CD4-positive, alpha-beta memory T cell (primary cell): ENCODE measurements at regions of chr11 and their contacts with region 1.

Region 1: DNA sequence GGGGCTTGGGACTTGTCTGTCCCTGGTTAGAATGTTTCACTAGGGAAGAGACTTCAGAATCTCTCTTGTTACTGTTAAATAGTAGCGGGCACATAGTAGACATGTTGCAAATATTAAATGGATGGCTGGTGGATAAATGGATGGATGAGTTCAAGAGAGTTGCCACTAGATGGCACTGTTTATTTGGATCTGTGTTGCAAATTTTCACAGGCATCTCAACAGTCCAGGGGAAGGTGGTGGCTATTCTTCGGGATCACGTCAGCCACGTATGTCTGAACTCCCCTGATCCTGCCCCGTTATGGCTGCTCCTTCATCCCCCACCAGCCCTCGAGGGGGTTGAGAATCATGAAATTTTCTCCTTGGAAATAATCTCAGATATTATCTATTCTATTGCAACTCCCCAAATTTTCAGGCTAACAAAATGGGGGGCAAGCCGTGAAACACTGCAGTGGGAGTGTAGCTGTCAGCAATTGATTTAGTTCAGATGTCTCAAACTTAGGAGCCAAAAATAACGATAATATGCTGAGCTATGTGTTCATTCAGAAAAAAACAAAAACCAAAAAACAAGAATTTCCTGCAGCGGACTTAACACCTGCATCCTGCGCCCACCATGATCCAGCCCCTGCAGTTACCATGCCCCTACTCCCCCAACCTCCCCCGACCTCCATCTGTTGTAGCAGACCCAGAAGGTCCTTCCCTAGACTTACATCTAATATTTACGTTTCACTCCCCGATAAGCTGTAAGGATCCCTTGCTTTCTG is 29.1 kb upstream of the BIRC3 start:
- DNase-seq: peak; percentile 56 to 74 (median 71)
- H3K4me3 ChIP-seq: no peak overlapping the region
- H3K4me3 Mint-ChIP-seq: peak overlapping the region in 5 of 8 donors; percentile 5 to 32 (median 12)
- H3K27ac ChIP-seq: no peak overlapping the region
- H3K27ac Mint-ChIP-seq: peak overlapping the region in 5 of 7 donors; percentile 19 to 79 (median 63)
- H3K4me1 ChIP-seq: peaks cover 18% of the 10 kb centered on the region
- H3K4me1 Mint-ChIP-seq: peaks cover 17 to 36% (median 20%) of the 10 kb centered on the region in 4 donors
- H3K27me3 ChIP-seq: no peaks in the 10 kb centered on the region
- H3K27me3 Mint-ChIP-seq: peaks cover 0 to 2% of the 10 kb centered on the region in 2 donors

Region 2: DNA sequence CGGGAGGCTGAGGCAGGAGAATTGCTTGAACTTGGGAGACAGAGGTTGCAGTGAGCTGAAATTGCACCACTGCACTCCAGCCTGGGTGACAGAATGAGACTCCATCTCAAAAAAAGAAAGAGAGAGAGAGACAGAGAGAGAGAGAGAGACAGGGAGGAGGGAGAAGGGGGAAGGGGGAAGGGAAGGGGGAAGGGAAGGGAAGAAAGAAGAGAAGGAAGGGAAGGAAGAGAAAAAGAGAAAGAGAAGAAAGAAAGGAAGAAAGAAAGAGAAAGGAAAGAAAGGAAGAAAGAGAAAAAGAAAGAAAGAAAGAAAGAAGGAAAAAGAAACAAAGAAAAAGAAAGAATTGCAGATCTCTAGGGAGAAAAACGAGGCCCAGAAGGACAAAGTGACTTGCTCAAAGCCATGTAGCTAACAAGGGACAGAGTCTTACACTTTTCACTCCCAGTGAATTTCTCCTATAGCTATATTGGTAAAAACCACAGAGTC is 44.7 kb before region 1 on chr11:
- CTCF ChIA-PET with region 1: no interaction called
- POLR2A ChIA-PET with region 1: no interaction called
- intact Hi-C with region 1: no loop called
- DNase-seq: no peak
- H3K4me3 ChIP-seq: no peak overlapping the region
- H3K4me3 Mint-ChIP-seq: no peak overlapping the region
- H3K27ac ChIP-seq: no peak overlapping the region
- H3K27ac Mint-ChIP-seq: no peak overlapping the region
- H3K4me1 ChIP-seq: no peaks in the 10 kb centered on the region
- H3K4me1 Mint-ChIP-seq: peaks cover 0 to 1% (median 0%) of the 10 kb centered on the region in 4 donors
- H3K27me3 ChIP-seq: no peaks in the 10 kb centered on the region
- H3K27me3 Mint-ChIP-seq: peaks cover 8 to 9% of the 10 kb centered on the region in 2 donors

Region 3: DNA sequence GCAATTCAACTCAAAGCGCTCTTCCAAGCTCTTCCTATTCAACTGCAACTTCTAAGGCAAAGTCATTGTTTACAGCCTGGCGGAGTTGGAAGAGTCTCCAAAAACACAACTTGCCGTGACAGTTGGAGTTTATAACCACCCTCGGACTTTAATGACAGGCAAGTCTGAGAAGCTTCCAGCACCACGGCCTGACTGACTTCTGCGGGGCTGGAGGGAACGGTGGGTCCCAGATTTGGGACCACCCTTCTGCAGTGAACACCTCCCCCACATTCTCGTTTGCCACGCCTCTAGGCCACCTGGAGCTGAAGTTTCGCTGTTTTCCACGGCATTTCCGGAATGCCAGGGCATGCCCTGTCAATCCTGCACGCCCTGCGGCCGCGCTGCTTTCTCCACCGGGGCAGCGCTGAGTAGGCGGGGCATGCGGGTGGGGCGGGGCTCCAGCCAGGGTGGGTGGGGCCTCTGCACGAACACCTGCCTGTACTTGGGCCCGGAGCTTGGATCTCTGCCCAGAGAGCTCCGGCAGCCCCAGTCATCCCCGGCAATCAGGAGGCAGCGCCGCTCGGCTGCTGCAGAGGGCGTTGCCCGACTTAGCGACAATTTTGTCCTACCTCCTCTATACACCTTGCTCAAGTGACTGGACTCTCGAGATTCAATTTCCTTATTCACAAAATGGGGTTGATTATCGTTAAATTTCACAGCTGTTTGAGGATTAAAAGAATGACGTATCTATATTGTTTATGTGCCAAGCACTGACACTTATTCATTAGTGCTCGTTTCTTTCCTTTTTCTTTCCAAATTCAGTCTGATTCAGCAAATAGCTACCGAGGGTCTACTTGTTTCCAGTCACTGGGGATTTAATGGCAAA is 19.6 kb before region 1 on chr11:
- CTCF ChIA-PET with region 1: interaction called, 17 read pairs
- POLR2A ChIA-PET with region 1: interaction called, 6 read pairs
- intact Hi-C with region 1: no loop called
- DNase-seq: peak; percentile 80 to 88 (median 85)
- H3K4me3 ChIP-seq: peak overlapping the region; percentile 45 to 49
- H3K4me3 Mint-ChIP-seq: peak overlapping the region; percentile 65 to 84 (median 77)
- H3K27ac ChIP-seq: no peak overlapping the region
- H3K27ac Mint-ChIP-seq: peak overlapping the region; percentile 68 to 85 (median 78)
- H3K4me1 ChIP-seq: peaks cover 23% of the 10 kb centered on the region
- H3K4me1 Mint-ChIP-seq: peaks cover 21 to 37% (median 27%) of the 10 kb centered on the region in 4 donors
- H3K27me3 ChIP-seq: no peaks in the 10 kb centered on the region
- H3K27me3 Mint-ChIP-seq: peaks cover 0 to 4% of the 10 kb centered on the region in 2 donors

Region 4: DNA sequence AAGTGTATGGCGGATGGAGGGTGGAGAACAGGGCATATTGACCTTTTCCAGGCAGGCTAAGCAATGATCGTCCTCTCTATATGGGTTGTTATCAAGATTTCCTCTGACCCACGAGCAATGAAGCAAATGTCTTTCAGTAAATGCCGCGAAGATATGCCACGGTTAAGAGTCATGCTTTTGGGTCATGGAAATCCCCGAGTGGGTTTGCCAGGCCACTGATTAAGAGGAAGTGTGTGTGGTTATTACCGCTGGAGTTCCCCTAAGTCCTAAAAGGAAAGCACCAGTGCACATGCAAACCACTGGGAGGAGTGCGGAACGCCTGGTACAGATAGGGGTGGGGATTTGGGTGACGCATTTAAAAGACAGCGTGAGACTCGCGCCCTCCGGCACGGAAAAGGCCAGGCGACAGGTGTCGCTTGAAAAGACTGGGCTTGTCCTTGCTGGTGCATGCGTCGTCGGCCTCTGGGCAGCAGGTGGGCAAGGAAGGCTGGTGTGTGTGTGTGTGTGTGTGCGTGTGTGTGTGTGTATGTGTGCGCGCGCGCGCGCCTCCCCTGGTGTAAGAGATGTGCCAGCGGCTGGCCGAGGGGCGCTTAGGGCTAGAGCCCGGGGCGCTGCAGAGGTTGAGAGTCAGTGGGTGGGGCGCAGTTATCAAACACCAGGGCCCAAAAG is 29.1 kb after region 1 on chr11 and contains the start of gene BIRC3:
- CTCF ChIA-PET with region 1: interaction called, 654 read pairs
- POLR2A ChIA-PET with region 1: interaction called, 109 read pairs
- intact Hi-C with region 1: loop called (anchors 1 kb)
- DNase-seq: peak; percentile 93 to 99 (median 96)
- H3K4me3 ChIP-seq: peak within 1 kb of the TSS; percentile 94 to 96
- H3K4me3 Mint-ChIP-seq: peak within 1 kb of the TSS; percentile 90 to 100 (median 96)
- H3K27ac ChIP-seq: peak within 1 kb of the TSS; percentile 95
- H3K27ac Mint-ChIP-seq: peak within 1 kb of the TSS; percentile 90 to 99 (median 99)
- H3K4me1 ChIP-seq: peaks cover 59% of the 10 kb centered on the region
- H3K4me1 Mint-ChIP-seq: peaks cover 46 to 81% (median 58%) of the 10 kb centered on the region in 4 donors
- H3K27me3 ChIP-seq: no peaks in the 10 kb centered on the region
- H3K27me3 Mint-ChIP-seq: no peaks in the 10 kb centered on the region
- total RNA-seq, gene BIRC3: 197 to 198 TPM

Region 5: GRCh38 chr11:102341844-102342318 is 53.7 kb after region 1 on chr11:
- CTCF ChIA-PET with region 1: interaction called, 89 read pairs
- POLR2A ChIA-PET with region 1: interaction called, 16 read pairs
- intact Hi-C with region 1: loop called (anchors 1 kb)
- DNase-seq: peak; percentile 64 to 78 (median 70)
- H3K4me3 ChIP-seq: no peak overlapping the region
- H3K4me3 Mint-ChIP-seq: no peak overlapping the region
- H3K27ac ChIP-seq: peak overlapping the region; percentile 1
- H3K27ac Mint-ChIP-seq: peak overlapping the region; percentile 53 to 93 (median 77)
- H3K4me1 ChIP-seq: peaks cover 14% of the 10 kb centered on the region
- H3K4me1 Mint-ChIP-seq: peaks cover 19 to 24% (median 23%) of the 10 kb centered on the region in 4 donors
- H3K27me3 ChIP-seq: no peaks in the 10 kb centered on the region
- H3K27me3 Mint-ChIP-seq: peaks cover 0 to 1% of the 10 kb centered on the region in 2 donors

Region 6: GRCh38 chr11:102367364-102367763 is 79.2 kb after region 1 on chr11:
- CTCF ChIA-PET with region 1: interaction called, 29 read pairs
- POLR2A ChIA-PET with region 1: no interaction called
- intact Hi-C with region 1: no loop called
- DNase-seq: peak in 4 of 5 donors; percentile 41 to 53 (median 50)
- H3K4me3 ChIP-seq: no peak overlapping the region
- H3K4me3 Mint-ChIP-seq: peak overlapping the region in 3 of 8 donors; percentile 7 to 27 (median 17)
- H3K27ac ChIP-seq: no peak overlapping the region
- H3K27ac Mint-ChIP-seq: peak overlapping the region; percentile 33 to 93 (median 72)
- H3K4me1 ChIP-seq: peaks cover 21% of the 10 kb centered on the region
- H3K4me1 Mint-ChIP-seq: peaks cover 27 to 37% (median 28%) of the 10 kb centered on the region in 4 donors
- H3K27me3 ChIP-seq: no peaks in the 10 kb centered on the region
- H3K27me3 Mint-ChIP-seq: no peaks in the 10 kb centered on the region

Region 7: DNA sequence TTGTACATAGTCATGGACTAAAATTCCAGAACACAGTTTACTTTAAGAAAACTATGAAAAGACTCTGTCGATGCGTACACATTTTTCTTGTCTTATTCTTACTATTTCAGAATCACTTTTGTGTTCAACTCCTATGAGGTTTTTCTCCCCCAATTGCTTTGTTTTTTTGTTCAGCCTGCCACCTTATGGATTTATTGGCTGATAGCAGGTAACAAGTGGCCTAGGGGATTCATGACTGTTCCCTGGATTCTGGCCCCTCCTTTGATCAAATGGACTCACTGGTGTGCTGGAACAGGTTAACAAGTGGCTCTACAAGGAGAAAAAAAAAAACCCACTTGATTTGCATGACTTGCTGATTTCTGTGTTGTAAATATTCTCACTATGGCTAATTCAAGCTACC is 326.3 kb after region 1 on chr11:
- CTCF ChIA-PET with region 1: interaction called, 28 read pairs
- POLR2A ChIA-PET with region 1: interaction called, 3 read pairs
- intact Hi-C with region 1: loop called (anchors 1 kb)
- DNase-seq: no peak
- H3K4me3 ChIP-seq: no peak overlapping the region
- H3K4me3 Mint-ChIP-seq: no peak overlapping the region
- H3K27ac ChIP-seq: no peak overlapping the region
- H3K27ac Mint-ChIP-seq: peak overlapping the region in 1 of 7 donors; percentile 15
- H3K4me1 ChIP-seq: no peaks in the 10 kb centered on the region
- H3K4me1 Mint-ChIP-seq: peaks cover 0 to 3% (median under 1%) of the 10 kb centered on the region in 4 donors
- H3K27me3 ChIP-seq: no peaks in the 10 kb centered on the region
- H3K27me3 Mint-ChIP-seq: peaks cover 2 to 3% of the 10 kb centered on the region in 2 donors

Region 8: GRCh38 chr11:102940714-102941588 is 652.8 kb after region 1 on chr11:
- CTCF ChIA-PET with region 1: interaction called, 7 read pairs
- POLR2A ChIA-PET with region 1: no interaction called
- intact Hi-C with region 1: loop called (anchors 1 kb)
- DNase-seq: peak in 4 of 5 donors; percentile 22 to 39 (median 30)
- H3K4me3 ChIP-seq: no peak overlapping the region
- H3K4me3 Mint-ChIP-seq: no peak overlapping the region
- H3K27ac ChIP-seq: no peak overlapping the region
- H3K27ac Mint-ChIP-seq: no peak overlapping the region
- H3K4me1 ChIP-seq: no peaks in the 10 kb centered on the region
- H3K4me1 Mint-ChIP-seq: peaks cover 0 to 5% (median 3%) of the 10 kb centered on the region in 4 donors
- H3K27me3 ChIP-seq: peaks cover 3% of the 10 kb centered on the region
- H3K27me3 Mint-ChIP-seq: peaks cover 1 to 5% of the 10 kb centered on the region in 2 donors